Activated naive CD8-positive, alpha-beta T cell treated with anti-CD3 and anti-CD28 coated beads, Interleukin-2, amount 10 ng/mL, durations not matched to agents 7 days and 5 days (primary cell): ENCODE measurements at regions of chr11 and their contacts with region 1.

Region 1: GRCh38 chr11:119101759-119102423 is at the start of gene DPAGT1:
- DNase-seq: peak; percentile 81
- ATAC-seq: peak; percentile 82
- H3K4me3 Mint-ChIP-seq: peak within 1 kb of the TSS; percentile 95
- H3K27ac Mint-ChIP-seq: peak within 1 kb of the TSS; percentile 99
- H3K4me1 Mint-ChIP-seq: peaks cover 30% of the 10 kb centered on the region
- H3K27me3 Mint-ChIP-seq: no peaks in the 10 kb centered on the region
- total RNA-seq, gene DPAGT1: 43.2 to 56.1 TPM

Region 2: DNA sequence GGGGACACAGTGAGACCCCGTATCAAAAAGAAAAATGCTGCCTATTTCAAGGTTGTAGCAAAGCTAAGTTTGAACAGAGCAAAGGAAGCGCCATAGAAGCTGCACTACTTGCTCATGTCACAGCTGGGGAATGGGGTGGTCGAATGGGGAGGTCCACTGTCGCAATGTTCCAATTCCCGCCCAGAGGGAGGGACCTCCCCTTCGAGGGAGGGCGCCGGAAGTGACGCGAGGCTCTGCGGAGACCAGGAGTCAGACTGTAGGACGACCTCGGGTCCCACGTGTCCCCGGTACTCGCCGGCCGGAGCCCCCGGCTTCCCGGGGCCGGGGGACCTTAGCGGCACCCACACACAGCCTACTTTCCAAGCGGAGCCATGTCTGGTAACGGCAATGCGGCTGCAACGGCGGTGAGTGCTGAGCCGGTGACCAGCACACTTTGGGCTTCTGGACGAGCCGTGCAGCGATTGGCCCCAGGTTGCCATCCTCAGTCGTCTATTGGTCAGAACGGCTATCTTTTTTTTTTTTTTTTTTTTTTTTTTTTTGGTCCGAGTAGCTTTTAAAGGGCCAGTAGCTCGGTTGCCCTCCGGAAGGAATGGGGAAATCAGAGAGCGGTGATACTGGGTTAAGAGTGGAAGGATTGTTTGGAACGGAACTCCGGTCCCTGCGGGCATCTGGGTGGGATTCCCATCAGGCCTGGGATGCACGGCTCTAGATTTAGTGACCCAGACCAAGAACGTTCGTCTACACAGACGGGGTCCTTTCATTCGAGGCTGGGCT is 17.0 kb before region 1 on chr11 and contains the start of gene HMBS:
- POLR2A ChIA-PET with region 1: interaction called, 83 read pairs
- DNase-seq: peak; percentile 92
- ATAC-seq: peak; percentile 88
- H3K4me3 Mint-ChIP-seq: peak within 1 kb of the TSS; percentile 93
- H3K27ac Mint-ChIP-seq: peak within 1 kb of the TSS; percentile 90
- H3K4me1 Mint-ChIP-seq: peaks cover 25% of the 10 kb centered on the region
- H3K27me3 Mint-ChIP-seq: no peaks in the 10 kb centered on the region
- total RNA-seq, gene HMBS: 18.0 to 18.8 TPM

Region 3: GRCh38 chr11:119121008-119121810 is 19.3 kb after region 1 on chr11 and contains the start of gene HINFP:
- POLR2A ChIA-PET with region 1: interaction called, 20 read pairs
- DNase-seq: peak; percentile 97
- ATAC-seq: peak; percentile 97
- H3K4me3 Mint-ChIP-seq: peak within 1 kb of the TSS; percentile 93
- H3K27ac Mint-ChIP-seq: peak within 1 kb of the TSS; percentile 86
- H3K4me1 Mint-ChIP-seq: peaks cover 25% of the 10 kb centered on the region
- H3K27me3 Mint-ChIP-seq: no peaks in the 10 kb centered on the region
- total RNA-seq, gene HINFP: 52.4 to 52.6 TPM

Region 4: GRCh38 chr11:119205574-119206510 is 104.0 kb after region 1 on chr11 and contains the start of gene CBL:
- POLR2A ChIA-PET with region 1: interaction called, 11 read pairs
- DNase-seq: peak; percentile 97
- ATAC-seq: peak; percentile 83
- H3K4me3 Mint-ChIP-seq: peak within 1 kb of the TSS; percentile 99
- H3K27ac Mint-ChIP-seq: peak within 1 kb of the TSS; percentile 90
- H3K4me1 Mint-ChIP-seq: peaks cover 14% of the 10 kb centered on the region
- H3K27me3 Mint-ChIP-seq: no peaks in the 10 kb centered on the region
- total RNA-seq, gene CBL: 45.1 to 45.2 TPM